Heart right ventricle (tissue), 16 donors: ENCODE measurements at regions of chr12 and their contacts with region 1.

Region 1: GRCh38 chr12:64560396-64561304 is 49.6 kb upstream of the RASSF3 start:
- DNase-seq: peak in 1 of 2 donors; percentile 18
- ATAC-seq: peak in 7 of 8 donors; percentile 38 to 72 (median 59)
- H3K4me3 ChIP-seq: no peak overlapping the region
- H3K27ac ChIP-seq: no peak overlapping the region
- H3K4me1 ChIP-seq: peaks cover 0 to 14% (median 0%) of the 10 kb centered on the region in 9 donors
- H3K27me3 ChIP-seq: no peaks in the 10 kb centered on the region
- CTCF ChIP-seq: no peak

Region 2: GRCh38 chr12:64587447-64587846 is 26.8 kb after region 1 on chr12:
- intact Hi-C with region 1: loop called in 1 of 10 experiments (anchors 2 kb)
- DNase-seq: no peak
- ATAC-seq: no peak
- H3K4me3 ChIP-seq: no peak overlapping the region
- H3K27ac ChIP-seq: no peak overlapping the region
- H3K4me1 ChIP-seq: peaks cover 3 to 29% (median 22%) of the 10 kb centered on the region in 9 donors
- H3K27me3 ChIP-seq: no peaks in the 10 kb centered on the region
- CTCF ChIP-seq: no peak

Region 3: GRCh38 chr12:64596252-64596793 is 35.7 kb after region 1 on chr12:
- intact Hi-C with region 1: loop called in 1 of 10 experiments (anchors 5 kb)
- DNase-seq: no peak
- ATAC-seq: peak in 3 of 8 donors; percentile 54 to 61 (median 55)
- H3K4me3 ChIP-seq: no peak overlapping the region
- H3K27ac ChIP-seq: peak overlapping the region in 1 of 10 donors; percentile 79
- H3K4me1 ChIP-seq: peaks cover 0 to 41% (median 0%) of the 10 kb centered on the region in 9 donors
- H3K27me3 ChIP-seq: no peaks in the 10 kb centered on the region
- CTCF ChIP-seq: no peak